ENCODE measurements at regions of chr3 and their contacts with region 1.

Region 1: GRCh38 chr3:181694805-181695660 is 16.7 kb upstream of the SOX2 start:
- DNase-seq: peak; percentile 47 to 88
- H3K4me3 ChIP-seq: peak overlapping the region; percentile 32 to 58 (median 50)
- H3K27ac ChIP-seq: peak overlapping the region; percentile 7 to 67 (median 66)
- H3K4me1 ChIP-seq: peaks cover 12 to 19% (median 17%) of the 10 kb centered on the region in 4 donors
- H3K27me3 ChIP-seq: peaks cover 0 to 54% (median 41%) of the 10 kb centered on the region in 3 donors
- CTCF ChIP-seq: peak in 1 of 7 experiments; percentile 14
- EP300 ChIP-seq: no peak
- POLR2A ChIP-seq: no peak

Region 2: GRCh38 chr3:181326637-181327223 is 368.3 kb before region 1 on chr3:
- intact Hi-C with region 1: loop called (anchors 10 kb)
- DNase-seq: peak in 1 of 2 donors; percentile 54
- H3K4me3 ChIP-seq: no peak overlapping the region
- H3K27ac ChIP-seq: no peak overlapping the region
- H3K4me1 ChIP-seq: peaks cover 0 to 13% (median 0%) of the 10 kb centered on the region in 4 donors
- H3K27me3 ChIP-seq: no peaks in the 10 kb centered on the region
- CTCF ChIP-seq: peak in 5 of 7 experiments; percentile 23 to 61 (median 47)
- EP300 ChIP-seq: no peak
- POLR2A ChIP-seq: no peak

Region 3: GRCh38 chr3:181823716-181824115 is 128.7 kb after region 1 on chr3:
- intact Hi-C with region 1: no loop called
- DNase-seq: peak; percentile 27 to 28
- H3K4me3 ChIP-seq: no peak overlapping the region
- H3K27ac ChIP-seq: peak overlapping the region in 2 of 5 donors; percentile 38 to 46
- H3K4me1 ChIP-seq: peaks cover 0 to 14% (median 10%) of the 10 kb centered on the region in 4 donors
- H3K27me3 ChIP-seq: no peaks in the 10 kb centered on the region
- CTCF ChIP-seq: no peak
- EP300 ChIP-seq: no peak
- POLR2A ChIP-seq: no peak

Region 4: DNA sequence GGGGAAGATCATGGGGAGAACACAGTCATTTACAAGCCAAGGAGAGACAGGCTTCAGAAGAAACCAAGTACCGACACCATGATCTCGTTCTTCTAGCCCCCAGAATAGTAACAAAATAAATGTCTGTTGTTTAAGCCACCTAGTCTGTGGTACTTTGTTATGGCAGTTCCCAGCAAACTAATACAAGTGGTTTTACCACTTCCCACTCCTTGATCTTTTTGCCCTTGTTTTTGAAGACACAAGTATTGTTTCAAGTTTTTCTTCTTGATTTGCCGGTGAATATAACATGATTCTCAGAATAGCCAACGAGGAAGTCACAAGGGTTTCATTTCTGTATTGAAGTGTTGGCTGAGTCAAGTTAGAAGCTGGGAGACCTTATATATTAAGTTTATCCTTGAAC is 237.0 kb after region 1 on chr3:
- intact Hi-C with region 1: no loop called
- DNase-seq: no peak
- H3K4me3 ChIP-seq: no peak overlapping the region
- H3K27ac ChIP-seq: no peak overlapping the region
- H3K4me1 ChIP-seq: no peaks in the 10 kb centered on the region
- H3K27me3 ChIP-seq: no peaks in the 10 kb centered on the region
- CTCF ChIP-seq: no peak
- EP300 ChIP-seq: no peak
- POLR2A ChIP-seq: no peak